BJ (cell line): ENCODE measurements at regions of chr21 and their contacts with region 1.

Region 1: GRCh38 chr21:45555551-45556301 is 13.5 kb upstream of the SLC19A1 start:
- DNase-seq: no peak
- H3K4me3 ChIP-seq: peak overlapping the region; percentile 45
- H3K27me3 ChIP-seq: peaks cover 12% of the 10 kb centered on the region
- CTCF ChIP-seq: peak; percentile 80

Region 2: GRCh38 chr21:45570826-45571601 is 15.3 kb after region 1 on chr21:
- CTCF ChIA-PET with region 1: interaction called, 19 read pairs
- POLR2A ChIA-PET with region 1: interaction called, 3 read pairs
- DNase-seq: no peak
- H3K4me3 ChIP-seq: no peak overlapping the region
- H3K27me3 ChIP-seq: peaks cover 15% of the 10 kb centered on the region
- CTCF ChIP-seq: no peak

Region 3: DNA sequence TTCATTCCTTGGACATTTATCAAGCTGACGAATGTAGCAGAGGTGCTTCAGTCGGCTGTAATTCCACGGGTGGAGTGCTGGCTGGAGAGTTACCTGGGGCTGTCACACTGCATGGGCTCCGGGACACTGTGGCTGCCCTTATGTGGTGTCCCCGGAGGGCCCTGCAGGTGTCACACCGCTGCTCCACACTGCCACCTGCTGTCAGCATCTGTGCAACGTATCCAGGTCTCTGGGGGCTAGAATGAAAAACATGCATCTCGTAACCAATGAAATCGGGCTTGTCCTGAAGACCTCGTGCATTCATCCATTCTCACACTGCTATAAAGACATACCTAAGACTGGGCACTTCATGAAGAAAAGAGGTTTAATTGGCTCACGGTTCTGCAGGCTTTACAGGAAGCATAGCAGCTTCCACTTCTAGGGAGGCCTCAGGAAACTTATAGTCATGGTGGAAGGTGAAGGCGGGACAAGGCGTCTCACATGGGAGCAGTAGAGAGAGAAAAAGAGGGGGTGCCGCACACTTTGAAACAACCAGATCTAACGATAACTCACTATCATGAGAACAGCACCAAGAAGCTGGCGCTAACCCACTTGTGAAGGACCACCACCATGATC is 41.1 kb after region 1 on chr21:
- CTCF ChIA-PET with region 1: interaction called, 71 read pairs
- POLR2A ChIA-PET with region 1: interaction called, 6 read pairs
- DNase-seq: no peak
- H3K4me3 ChIP-seq: no peak overlapping the region
- H3K27me3 ChIP-seq: peaks cover 11% of the 10 kb centered on the region
- CTCF ChIP-seq: peak; percentile 93

Region 4: DNA sequence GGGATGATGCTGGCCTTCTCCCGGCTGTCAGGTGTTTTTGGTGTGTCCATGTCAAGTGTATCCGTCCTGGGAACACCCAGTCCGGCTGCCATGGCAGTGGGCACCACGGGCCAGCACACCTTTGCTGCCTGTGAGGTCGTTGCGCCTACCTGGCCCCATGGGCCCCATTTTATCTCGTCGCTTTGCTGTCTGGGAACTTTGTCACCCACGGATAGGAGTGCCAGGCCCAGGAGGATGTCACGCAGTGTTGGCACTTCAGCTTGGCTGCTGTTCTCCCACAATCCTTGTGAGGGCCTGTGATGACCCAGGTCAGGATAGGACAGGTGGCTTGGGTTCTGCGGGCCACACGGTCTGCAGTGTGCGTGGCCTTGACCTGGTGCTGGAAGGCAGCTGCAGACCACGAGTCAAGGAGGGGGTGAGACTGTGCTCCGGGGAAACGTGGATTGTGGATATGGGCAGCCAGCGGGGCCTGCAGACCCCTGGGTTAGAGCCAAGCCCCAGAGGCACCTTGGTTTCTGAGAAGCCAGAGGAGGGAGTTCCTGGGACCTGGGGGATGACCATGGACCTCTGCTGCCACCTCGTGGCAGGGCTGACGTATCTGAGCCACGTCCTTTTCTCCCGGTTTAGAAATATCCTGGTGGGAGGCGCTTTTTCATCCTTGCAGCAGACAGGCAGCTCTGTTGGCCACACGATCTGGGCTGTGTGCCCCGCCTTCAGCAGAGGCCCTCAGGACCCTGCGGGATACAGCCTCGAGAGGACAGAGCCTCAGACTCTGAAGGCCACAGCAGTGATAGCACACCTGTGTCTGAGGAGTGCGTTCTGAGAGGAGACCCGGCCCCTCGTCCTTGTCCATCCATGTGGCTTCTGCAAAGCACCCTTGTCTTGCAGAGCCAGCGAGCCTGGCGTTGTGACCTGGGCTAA is 264.7 kb after region 1 on chr21:
- CTCF ChIA-PET with region 1: interaction called, 24 read pairs
- POLR2A ChIA-PET with region 1: no interaction called
- DNase-seq: peak; percentile 19
- H3K4me3 ChIP-seq: no peak overlapping the region
- H3K27me3 ChIP-seq: peaks cover 14% of the 10 kb centered on the region
- CTCF ChIP-seq: peak; percentile 89

Region 5: GRCh38 chr21:45923146-45923545 is 367.4 kb after region 1 on chr21:
- CTCF ChIA-PET with region 1: interaction called, 16 read pairs
- POLR2A ChIA-PET with region 1: no interaction called
- DNase-seq: peak; percentile 14
- H3K4me3 ChIP-seq: no peak overlapping the region
- H3K27me3 ChIP-seq: peaks cover 3% of the 10 kb centered on the region; the same call in 1 of the 2 replicates
- CTCF ChIP-seq: peak; percentile 92